ENCODE measurements at regions of chr2 and their contacts with region 1.

Region 1: GRCh38 chr2:210171309-210172203 is at the start of gene KANSL1L:
- DNase-seq: peak; percentile 93 to 99 (median 97)
- ATAC-seq: peak; percentile 88
- H3K4me3 ChIP-seq: peak within 1 kb of the TSS; percentile 85 to 88
- H3K4me3 Mint-ChIP-seq: peak within 1 kb of the TSS; percentile 99
- H3K27ac ChIP-seq: peak within 1 kb of the TSS; percentile 80 to 91
- H3K27ac Mint-ChIP-seq: peak within 1 kb of the TSS; percentile 97
- H3K4me1 ChIP-seq: peaks cover 10% of the 10 kb centered on the region
- H3K4me1 Mint-ChIP-seq: peaks cover 31% of the 10 kb centered on the region
- H3K27me3 ChIP-seq: no peaks in the 10 kb centered on the region
- H3K27me3 Mint-ChIP-seq: no peaks in the 10 kb centered on the region
- CTCF ChIP-seq: no peak
- total RNA-seq, gene KANSL1L: 4.2 to 4.7 TPM

Region 2: GRCh38 chr2:208254871-208255556 is 1916.5 kb before region 1 on chr2 and contains the start of gene IDH1:
- CTCF ChIA-PET with region 1: no interaction called
- POLR2A ChIA-PET with region 1: no interaction called
- intact Hi-C with region 1: loop called (anchors 5 kb)
- DNase-seq: peak; percentile 83 to 97 (median 93)
- ATAC-seq: peak; percentile 85
- H3K4me3 ChIP-seq: peak within 1 kb of the TSS; percentile 99
- H3K4me3 Mint-ChIP-seq: peak within 1 kb of the TSS; percentile 94
- H3K27ac ChIP-seq: peak within 1 kb of the TSS; percentile 31 to 51
- H3K27ac Mint-ChIP-seq: peak within 1 kb of the TSS; percentile 83
- H3K4me1 ChIP-seq: peaks cover 13% of the 10 kb centered on the region
- H3K4me1 Mint-ChIP-seq: peaks cover 31% of the 10 kb centered on the region
- H3K27me3 ChIP-seq: no peaks in the 10 kb centered on the region
- H3K27me3 Mint-ChIP-seq: no peaks in the 10 kb centered on the region
- CTCF ChIP-seq: no peak
- total RNA-seq, gene IDH1: 3.0 to 4.0 TPM

Region 3: DNA sequence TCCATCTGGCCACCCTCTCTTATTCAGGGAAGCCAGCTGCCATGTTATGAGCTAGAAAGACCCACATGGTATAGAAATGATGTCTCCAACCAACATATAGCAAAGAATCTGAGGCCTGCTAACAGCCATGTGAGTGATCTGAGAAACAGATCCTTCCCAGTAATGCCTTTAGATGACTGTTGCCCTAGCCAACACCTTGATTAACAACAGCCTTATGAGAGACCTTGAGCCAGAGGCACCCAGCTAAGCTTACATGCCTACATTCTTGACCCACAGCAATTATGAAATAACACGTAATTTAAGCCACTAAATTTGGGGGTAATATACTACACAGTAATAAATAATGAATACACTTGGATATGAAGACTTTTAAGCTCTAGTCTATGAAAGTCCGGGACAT is 13.3 kb before region 1 on chr2:
- CTCF ChIA-PET with region 1: no interaction called
- POLR2A ChIA-PET with region 1: no interaction called
- intact Hi-C with region 1: no loop called
- DNase-seq: no peak
- ATAC-seq: no peak
- H3K4me3 ChIP-seq: no peak overlapping the region
- H3K4me3 Mint-ChIP-seq: no peak overlapping the region
- H3K27ac ChIP-seq: no peak overlapping the region
- H3K27ac Mint-ChIP-seq: no peak overlapping the region
- H3K4me1 ChIP-seq: no peaks in the 10 kb centered on the region
- H3K4me1 Mint-ChIP-seq: peaks cover 17% of the 10 kb centered on the region
- H3K27me3 ChIP-seq: no peaks in the 10 kb centered on the region
- H3K27me3 Mint-ChIP-seq: peaks cover 2% of the 10 kb centered on the region
- CTCF ChIP-seq: no peak

Region 4: DNA sequence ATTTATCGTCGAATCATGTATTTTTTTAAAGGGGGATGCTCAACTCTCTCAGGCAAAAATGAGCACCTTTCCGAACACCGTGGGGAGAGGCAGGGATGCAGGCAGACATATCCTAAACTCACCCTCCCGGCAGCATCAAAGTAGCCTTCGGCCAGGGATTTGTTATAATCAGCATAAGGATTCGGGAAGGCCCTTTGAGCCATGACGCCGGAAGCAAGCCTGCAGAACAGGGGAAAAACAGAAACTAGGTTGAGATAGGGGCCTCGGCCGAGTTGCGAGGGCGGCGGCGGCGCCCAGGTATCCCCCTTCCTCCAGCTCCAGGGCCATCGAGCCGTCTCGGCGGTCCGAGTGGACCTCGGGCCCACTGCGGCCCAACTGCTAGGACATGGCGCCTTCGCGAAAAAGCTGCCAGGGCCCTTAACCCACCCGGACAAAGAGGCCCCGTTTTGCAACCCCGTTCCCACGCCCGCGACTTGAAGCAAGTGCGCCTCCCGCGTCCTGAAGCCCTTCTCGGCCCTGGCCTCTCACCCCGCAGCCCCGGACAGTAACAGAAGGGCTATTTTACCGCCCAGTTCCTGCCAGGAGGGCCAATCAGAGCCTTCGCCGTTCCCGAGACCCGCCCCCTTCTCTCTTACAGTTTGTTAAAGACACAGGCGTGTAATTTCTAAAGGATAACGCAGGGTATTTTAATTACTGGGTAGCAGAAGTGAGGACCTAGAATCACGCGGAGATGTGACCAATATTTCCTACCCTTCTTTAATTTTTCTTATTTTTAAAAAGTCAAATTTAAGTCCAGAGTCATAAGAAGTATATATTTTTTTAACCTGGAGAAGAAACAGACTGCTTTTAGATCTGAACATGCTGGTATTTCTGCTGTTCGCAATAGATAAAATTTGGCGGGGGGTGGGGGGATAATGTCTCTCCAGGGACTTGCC is 304.9 kb after region 1 on chr2 and contains the start of gene LANCL1:
- CTCF ChIA-PET with region 1: no interaction called
- POLR2A ChIA-PET with region 1: no interaction called
- intact Hi-C with region 1: loop called (anchors 1 to 5 kb)
- DNase-seq: peak; percentile 65 to 88 (median 80)
- ATAC-seq: peak; percentile 96
- H3K4me3 ChIP-seq: peak within 1 kb of the TSS; percentile 87 to 91
- H3K4me3 Mint-ChIP-seq: peak within 1 kb of the TSS; percentile 100
- H3K27ac ChIP-seq: peak within 1 kb of the TSS; percentile 88 to 89
- H3K27ac Mint-ChIP-seq: peak within 1 kb of the TSS; percentile 100
- H3K4me1 ChIP-seq: peaks cover 26% of the 10 kb centered on the region
- H3K4me1 Mint-ChIP-seq: peaks cover 73% of the 10 kb centered on the region
- H3K27me3 ChIP-seq: no peaks in the 10 kb centered on the region
- H3K27me3 Mint-ChIP-seq: no peaks in the 10 kb centered on the region
- CTCF ChIP-seq: no peak
- total RNA-seq, gene LANCL1: 15.5 to 19.1 TPM